ENCODE measurements at regions of chr2 and their contacts with region 1.

Region 1: GRCh38 chr2:239401067-239401880 is 454 bp upstream of the HDAC4 start:
- DNase-seq: peak; percentile 99
- H3K4me3 ChIP-seq: peak overlapping the region; percentile 16 to 56 (median 19)
- H3K27ac ChIP-seq: peak overlapping the region; percentile 94 to 100 (median 100)
- H3K4me1 ChIP-seq: peaks cover 28 to 32% of the 10 kb centered on the region in 2 donors
- H3K27me3 ChIP-seq: no peaks in the 10 kb centered on the region
- CTCF ChIP-seq: no peak
- POLR2A ChIP-seq: peak; percentile 90 to 98

Region 2: GRCh38 chr2:239143858-239144718 is 257.2 kb before region 1 on chr2:
- intact Hi-C with region 1: loop called (anchors 10 kb)
- DNase-seq: peak; percentile 16 to 22
- H3K4me3 ChIP-seq: no peak overlapping the region
- H3K27ac ChIP-seq: no peak overlapping the region
- H3K4me1 ChIP-seq: peaks cover 0 to 6% of the 10 kb centered on the region in 2 donors
- H3K27me3 ChIP-seq: no peaks in the 10 kb centered on the region
- CTCF ChIP-seq: peak; percentile 13 to 54 (median 43)
- POLR2A ChIP-seq: no peak

Region 3: DNA sequence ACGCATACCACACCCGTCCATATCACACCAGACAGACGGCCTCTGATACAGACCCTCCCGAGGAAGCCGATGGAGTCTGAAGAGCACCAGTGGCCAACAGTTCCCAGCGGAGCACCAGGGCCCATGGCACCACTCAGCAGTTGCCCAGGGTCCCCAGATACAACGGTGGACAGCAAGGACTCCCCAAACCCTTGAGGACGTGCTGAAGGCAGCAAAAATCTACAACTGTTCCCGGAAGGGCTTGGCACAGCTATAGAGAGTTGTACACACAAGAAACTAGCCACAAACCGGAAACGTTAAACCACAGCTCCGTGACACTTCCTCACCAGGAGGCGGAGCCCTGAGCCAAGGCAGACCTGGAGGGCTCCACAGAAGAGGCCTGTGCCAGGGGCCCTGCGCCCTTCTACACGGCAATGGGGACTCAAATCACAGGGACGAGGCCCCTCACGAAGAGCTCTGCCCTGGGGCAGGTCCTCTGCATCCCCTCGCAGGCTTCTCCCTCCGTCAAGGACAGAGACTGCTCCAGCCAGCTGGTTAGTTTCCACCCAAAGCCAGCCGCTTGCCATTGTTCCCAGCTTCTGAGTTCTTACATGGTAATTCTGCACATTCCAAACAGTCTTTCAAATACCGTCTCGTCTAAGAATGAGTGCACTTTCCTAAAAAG is 133.9 kb before region 1 on chr2:
- intact Hi-C with region 1: loop called (anchors 10 kb)
- DNase-seq: peak; percentile 61 to 68
- H3K4me3 ChIP-seq: no peak overlapping the region
- H3K27ac ChIP-seq: peak overlapping the region; percentile 74 to 91 (median 87)
- H3K4me1 ChIP-seq: peaks cover 56 to 85% of the 10 kb centered on the region in 2 donors
- H3K27me3 ChIP-seq: no peaks in the 10 kb centered on the region
- CTCF ChIP-seq: peak in 2 of 6 experiments; percentile 2 to 31
- POLR2A ChIP-seq: no peak